Panc1 (cell line): ENCODE measurements at regions of chr6 and their contacts with region 1.

Region 1: DNA sequence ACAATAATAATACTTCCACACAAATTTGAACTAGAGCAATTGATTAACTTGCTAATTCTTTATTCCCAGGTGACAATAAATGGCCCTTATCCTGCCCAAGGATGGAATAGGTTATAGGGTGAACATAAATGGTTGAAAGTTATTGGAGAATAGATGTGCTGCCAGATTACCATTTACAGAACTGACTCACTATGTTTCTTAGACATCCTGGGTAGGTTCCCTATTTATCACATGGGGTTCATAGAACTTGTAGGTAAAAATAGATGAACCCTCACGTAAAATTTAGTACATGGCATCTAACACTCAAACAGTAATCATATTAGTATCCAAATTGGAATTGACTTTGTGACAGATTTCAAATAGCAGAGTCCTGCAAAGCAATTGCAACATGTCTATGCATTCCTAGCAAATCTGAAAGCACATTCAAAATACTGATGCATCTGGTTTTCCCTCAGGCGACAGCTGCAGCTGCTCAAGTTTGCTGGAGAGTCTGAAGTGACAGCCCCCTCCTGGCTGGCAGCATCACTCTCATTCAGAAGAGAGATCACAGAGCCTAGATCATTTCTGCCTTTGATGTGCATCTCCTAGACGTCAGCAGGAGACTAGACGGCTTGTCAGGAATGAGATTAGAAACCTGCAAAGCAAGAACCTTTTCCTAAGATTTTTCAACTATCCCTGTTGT is 80.2 kb upstream of the RNF217 start:
- DNase-seq: no peak
- ATAC-seq: no peak
- H3K4me3 ChIP-seq: no peak overlapping the region
- H3K27ac ChIP-seq: no peak overlapping the region
- H3K4me1 ChIP-seq: no peaks in the 10 kb centered on the region
- H3K27me3 ChIP-seq: no peaks in the 10 kb centered on the region; the same call in 1 of the 2 replicates
- CTCF ChIP-seq: no peak

Region 2: DNA sequence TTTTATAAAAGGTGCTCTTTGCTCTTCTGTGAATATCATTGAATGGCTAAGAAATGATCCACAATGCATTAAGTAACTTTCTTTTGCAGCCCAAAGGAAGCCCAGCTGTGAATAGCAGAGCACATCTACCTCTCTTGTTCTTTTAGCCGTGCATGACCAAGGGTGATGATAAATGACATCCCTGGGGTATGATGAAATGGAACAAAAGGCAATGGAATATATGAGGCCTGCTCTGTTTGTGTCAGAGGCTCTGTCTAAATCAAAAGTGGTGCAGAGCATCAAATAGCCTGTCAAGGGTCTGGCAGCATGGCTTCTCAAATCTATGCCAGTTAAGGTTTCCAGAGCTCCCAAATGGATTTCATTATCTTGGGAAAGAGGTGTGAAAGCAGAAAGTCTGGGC is 282.4 kb before region 1 on chr6:
- CTCF ChIA-PET with region 1: interaction called, 11 read pairs
- POLR2A ChIA-PET with region 1: no interaction called
- in situ Hi-C with region 1: no loop called
- intact Hi-C with region 1: no loop called
- DNase-seq: no peak
- ATAC-seq: no peak
- H3K4me3 ChIP-seq: no peak overlapping the region
- H3K27ac ChIP-seq: no peak overlapping the region
- H3K4me1 ChIP-seq: no peaks in the 10 kb centered on the region; the same call in 1 of the 2 replicates
- H3K27me3 ChIP-seq: no peaks in the 10 kb centered on the region
- CTCF ChIP-seq: no peak